Dorsolateral prefrontal cortex (tissue), 120 donors: ENCODE measurements at regions of chr14 and their contacts with region 1.

Region 1: GRCh38 chr14:90399541-90400444 is 3.0 kb downstream of the CALM1 start:
- DNase-seq: peak; percentile 80 to 96 (median 92)
- H3K4me3 ChIP-seq: peak overlapping the region; percentile 76 to 100 (median 97)
- H3K27ac ChIP-seq: peak overlapping the region in 58 of 59 donors; percentile 21 to 99 (median 97)
- H3K27me3 ChIP-seq: no peaks in the 10 kb centered on the region
- CTCF ChIP-seq: peak; percentile 95 to 100 (median 100)

Region 2: GRCh38 chr14:90154110-90154509 is 245.7 kb before region 1 on chr14:
- intact Hi-C with region 1: no loop called
- DNase-seq: no peak
- H3K4me3 ChIP-seq: no peak overlapping the region
- H3K27ac ChIP-seq: no peak overlapping the region
- H3K27me3 ChIP-seq: no peaks in the 10 kb centered on the region
- CTCF ChIP-seq: no peak

Region 3: DNA sequence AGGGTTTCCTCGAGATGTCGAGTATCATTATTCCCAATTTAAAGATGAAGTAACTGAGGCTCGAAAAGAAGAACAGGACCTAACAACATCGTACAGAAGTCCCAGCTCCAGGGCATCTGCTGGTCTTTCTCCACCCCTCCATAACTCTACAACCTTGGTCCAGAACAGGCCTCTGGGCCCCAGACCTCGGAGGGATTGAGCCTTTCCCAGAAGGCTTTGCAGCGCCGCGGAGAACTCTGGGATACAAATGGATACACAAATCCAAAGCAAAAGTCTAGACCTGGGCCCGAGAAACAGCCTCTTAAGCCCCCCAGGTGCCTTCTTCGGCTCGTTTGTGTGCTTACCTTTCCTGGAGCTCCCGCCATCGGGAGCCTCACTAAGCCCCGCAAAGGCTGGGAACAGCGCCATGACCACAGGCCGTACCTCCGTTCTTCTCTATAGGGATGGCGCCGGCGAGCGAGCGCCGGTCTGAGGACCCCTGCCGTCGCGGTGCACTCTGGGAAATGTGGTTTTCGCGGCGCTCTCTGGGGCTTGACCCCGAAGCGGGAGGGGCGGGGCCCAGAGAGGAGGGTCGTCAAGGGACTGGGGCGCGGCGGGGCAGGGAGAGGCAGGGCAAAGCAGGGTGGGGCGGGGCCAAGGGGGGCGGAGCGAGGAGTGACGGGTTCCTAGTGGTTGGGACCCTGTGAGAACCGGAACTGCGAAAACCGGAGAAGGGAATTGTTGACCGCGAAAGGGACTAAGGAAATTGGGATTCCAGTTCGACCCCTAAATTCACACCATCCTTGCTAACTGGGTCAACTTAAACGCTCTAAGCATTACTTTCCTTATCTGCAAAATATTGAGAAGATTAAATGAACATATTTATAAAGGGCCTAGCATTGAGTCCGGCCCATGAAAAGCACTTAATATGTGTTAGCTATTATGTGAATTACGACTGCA is 68.0 kb before region 1 on chr14 and contains the start of gene NRDE2:
- intact Hi-C with region 1: loop called (anchors 5 kb)
- DNase-seq: peak; percentile 97 to 99 (median 97)
- H3K4me3 ChIP-seq: peak within 1 kb of the TSS; percentile 61 to 99 (median 80)
- H3K27ac ChIP-seq: peak within 1 kb of the TSS; percentile 76 to 97 (median 91)
- H3K27me3 ChIP-seq: no peaks in the 10 kb centered on the region
- CTCF ChIP-seq: peak in 38 of 56 donors; percentile 6 to 58 (median 32)
- total RNA-seq, gene NRDE2: 16.4 to 42.6 (median 27.7) TPM

Region 4: DNA sequence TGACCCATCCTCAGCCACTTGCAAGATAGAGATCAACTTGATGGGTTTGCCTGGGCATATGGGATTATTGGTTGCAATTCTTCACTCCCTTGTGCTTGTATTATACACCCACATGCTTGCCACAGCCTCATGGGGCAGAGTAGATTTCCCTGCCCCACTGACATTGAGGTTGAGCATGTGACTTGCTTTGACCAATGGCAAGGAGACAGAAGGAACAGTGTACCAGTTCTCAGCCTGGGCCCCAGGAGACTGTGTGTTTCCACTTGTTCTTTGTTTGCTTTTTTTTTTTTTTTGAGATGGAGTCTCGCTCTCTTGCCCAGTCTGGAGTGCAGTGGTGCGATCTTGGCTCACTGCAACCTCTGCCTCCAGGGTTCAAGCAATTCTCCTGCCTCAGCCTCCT is 28.9 kb after region 1 on chr14:
- intact Hi-C with region 1: no loop called
- DNase-seq: peak in 1 of 10 donors; percentile 12
- H3K4me3 ChIP-seq: no peak overlapping the region
- H3K27ac ChIP-seq: no peak overlapping the region
- H3K27me3 ChIP-seq: no peaks in the 10 kb centered on the region
- CTCF ChIP-seq: no peak

Region 5: DNA sequence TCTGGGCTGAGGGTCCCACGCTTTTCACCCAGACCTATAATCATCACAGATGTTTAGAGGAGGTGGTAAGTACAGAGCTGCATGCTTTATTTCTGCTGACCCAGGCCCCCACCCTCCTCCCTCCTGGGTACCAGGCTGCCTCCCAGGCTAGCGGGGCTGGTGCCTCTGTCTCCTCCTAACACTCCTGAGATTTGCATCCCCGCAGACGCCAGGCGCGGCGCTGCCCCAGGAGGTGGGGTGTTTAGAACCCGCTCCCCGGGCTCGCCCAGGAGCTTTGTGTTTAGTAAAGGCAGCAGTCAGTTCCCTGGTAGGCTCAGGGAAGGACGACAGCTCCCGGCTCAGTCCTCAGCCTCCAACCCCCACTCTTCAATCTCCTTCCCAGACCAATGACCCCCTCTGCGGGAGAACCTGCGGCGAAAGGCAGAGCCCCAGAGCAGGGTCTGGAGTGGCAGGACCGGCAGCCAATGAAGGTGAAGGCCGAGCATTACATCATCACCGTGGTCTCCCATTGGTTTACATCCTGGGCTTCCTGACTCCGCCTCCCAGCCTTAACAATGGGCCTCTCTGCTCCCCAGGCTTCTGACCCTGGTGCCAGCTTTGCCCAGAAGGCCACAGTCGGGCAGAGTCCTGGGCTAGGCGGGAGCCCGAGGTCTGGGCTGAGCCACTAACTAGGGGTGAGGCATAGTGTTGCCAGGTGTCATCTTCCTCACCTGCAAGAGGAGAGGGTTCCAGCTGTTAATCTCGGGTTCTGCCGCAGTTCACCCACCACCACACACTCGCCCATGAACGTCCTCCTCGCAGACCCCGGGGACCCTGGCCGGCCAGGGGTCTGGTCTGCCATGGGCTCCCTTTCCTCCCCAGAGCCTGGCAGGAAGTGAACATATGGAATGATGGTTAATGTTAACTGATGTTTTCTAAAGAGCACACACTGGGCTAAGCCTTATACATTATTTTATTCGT is 54.5 kb after region 1 on chr14:
- intact Hi-C with region 1: loop called (anchors 1 to 5 kb)
- DNase-seq: peak; percentile 95 to 99 (median 98)
- H3K4me3 ChIP-seq: peak overlapping the region; percentile 17 to 75 (median 55)
- H3K27ac ChIP-seq: peak overlapping the region; percentile 83 to 100 (median 98)
- H3K27me3 ChIP-seq: no peaks in the 10 kb centered on the region
- CTCF ChIP-seq: peak in 41 of 56 donors; percentile 3 to 64 (median 30)

Region 6: GRCh38 chr14:90518941-90519256 is 119.1 kb after region 1 on chr14:
- intact Hi-C with region 1: loop called in 1 of 2 experiments (anchors 2 kb)
- DNase-seq: peak in 2 of 10 donors; percentile 41 to 45
- H3K4me3 ChIP-seq: no peak overlapping the region
- H3K27ac ChIP-seq: peak overlapping the region in 42 of 59 donors; percentile 18 to 100 (median 77)
- H3K27me3 ChIP-seq: no peaks in the 10 kb centered on the region
- CTCF ChIP-seq: peak in 50 of 56 donors; percentile 8 to 67 (median 41)

Region 7: GRCh38 chr14:90534091-90534837 is 134.5 kb after region 1 on chr14:
- intact Hi-C with region 1: no loop called
- DNase-seq: no peak
- H3K4me3 ChIP-seq: no peak overlapping the region
- H3K27ac ChIP-seq: peak overlapping the region in 8 of 59 donors; percentile 9 to 58 (median 28)
- H3K27me3 ChIP-seq: no peaks in the 10 kb centered on the region
- CTCF ChIP-seq: no peak

Region 8: DNA sequence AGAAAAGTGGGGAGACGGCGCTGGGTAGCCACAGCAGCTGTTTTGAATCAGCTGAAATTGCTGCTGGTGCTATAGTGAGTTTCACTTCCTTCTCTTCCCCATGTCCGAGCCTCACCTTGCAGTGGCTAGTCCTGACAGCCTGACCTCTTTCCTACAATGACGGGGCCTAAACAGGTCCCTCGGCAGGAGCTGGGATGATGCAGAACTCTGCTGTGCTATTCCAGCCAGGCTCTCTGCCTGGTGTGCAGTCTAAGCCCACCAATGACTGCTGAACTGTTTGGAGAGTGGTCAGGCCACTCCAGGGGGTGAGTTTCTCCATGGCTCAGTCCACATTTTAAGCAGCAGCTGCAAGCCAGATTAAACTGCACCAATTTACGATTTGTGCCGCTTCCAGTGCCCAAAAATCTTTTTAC is 209.1 kb after region 1 on chr14:
- intact Hi-C with region 1: loop called (anchors 5 to 10 kb)
- DNase-seq: no peak
- H3K4me3 ChIP-seq: peak overlapping the region in 1 of 59 donors; percentile 27
- H3K27ac ChIP-seq: peak overlapping the region in 56 of 59 donors; percentile 13 to 94 (median 72)
- H3K27me3 ChIP-seq: no peaks in the 10 kb centered on the region
- CTCF ChIP-seq: no peak

Region 9: GRCh38 chr14:90758028-90758889 is 358.5 kb after region 1 on chr14:
- intact Hi-C with region 1: loop called (anchors 2 kb)
- DNase-seq: peak; percentile 66 to 93 (median 80)
- H3K4me3 ChIP-seq: peak overlapping the region; percentile 39 to 80 (median 64)
- H3K27ac ChIP-seq: peak overlapping the region; percentile 87 to 100 (median 98)
- H3K27me3 ChIP-seq: no peaks in the 10 kb centered on the region
- CTCF ChIP-seq: peak; percentile 80 to 99 (median 96)

Region 10: GRCh38 chr14:91060351-91061055 is 660.7 kb after region 1 on chr14 and contains the start of gene RPS6KA5:
- intact Hi-C with region 1: loop called in 1 of 2 experiments (anchors 5 kb)
- DNase-seq: peak; percentile 99 to 100 (median 100)
- H3K4me3 ChIP-seq: peak within 1 kb of the TSS; percentile 71 to 98 (median 93)
- H3K27ac ChIP-seq: peak within 1 kb of the TSS; percentile 88 to 100 (median 98)
- H3K27me3 ChIP-seq: no peaks in the 10 kb centered on the region
- CTCF ChIP-seq: peak in 44 of 56 donors; percentile 6 to 62 (median 38)
- total RNA-seq, gene RPS6KA5: 24.8 to 54.3 (median 39.0) TPM